Naive thymus-derived CD8-positive, alpha-beta T cell (primary cell): ENCODE measurements at regions of chr10 and their contacts with region 1.

Region 1: DNA sequence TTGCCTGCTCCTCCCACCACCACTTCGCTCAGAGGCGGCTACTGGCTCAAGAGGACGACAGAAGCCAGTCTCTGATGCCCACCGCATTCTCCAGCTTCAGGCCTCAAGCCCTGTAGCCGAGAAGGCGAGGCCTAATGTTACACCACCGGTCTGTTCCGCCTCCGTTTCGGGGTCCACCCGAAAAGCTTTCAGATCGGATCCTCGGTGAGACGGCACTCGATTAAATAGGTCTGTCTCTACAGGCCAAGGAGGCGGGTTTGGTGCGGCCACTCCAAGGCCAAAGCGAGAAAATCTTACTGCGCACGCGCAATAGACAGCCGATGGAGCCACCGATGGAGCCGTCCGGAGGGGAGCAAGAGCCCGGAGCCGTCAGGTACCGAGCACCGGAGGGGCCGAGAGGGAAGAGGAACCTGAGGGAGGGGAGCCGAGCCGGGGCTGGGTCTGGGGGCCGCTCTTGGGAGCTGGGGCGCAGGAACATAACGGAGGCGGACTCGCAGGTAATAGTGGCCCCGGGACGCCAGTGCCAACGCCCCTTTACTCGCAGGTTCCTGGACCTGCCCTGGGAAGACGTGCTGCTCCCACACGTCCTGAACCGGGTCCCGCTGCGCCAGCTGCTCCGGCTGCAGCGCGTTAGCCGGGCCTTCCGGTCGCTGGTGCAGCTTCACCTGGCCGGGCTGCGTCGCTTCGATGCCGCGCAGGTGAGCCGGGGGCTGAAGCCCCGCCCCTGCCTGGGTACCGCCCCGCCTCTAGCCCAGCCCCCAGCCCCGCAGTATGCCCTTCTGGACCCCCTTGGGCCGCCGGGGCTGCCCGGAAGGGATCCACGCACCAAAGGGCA is at the start of gene FBXL15:
- DNase-seq: peak; percentile 77 to 97 (median 90)
- ATAC-seq: peak; percentile 71 to 76
- H3K4me3 Mint-ChIP-seq: peak within 1 kb of the TSS; percentile 93 to 100 (median 98)
- H3K27ac Mint-ChIP-seq: peak within 1 kb of the TSS; percentile 92 to 97 (median 95)
- H3K4me1 Mint-ChIP-seq: peaks cover 23 to 48% (median 46%) of the 10 kb centered on the region in 4 donors
- H3K27me3 Mint-ChIP-seq: peaks cover 11 to 25% (median 16%) of the 10 kb centered on the region in 5 donors
- polyA plus RNA-seq, gene FBXL15: 26.8 to 35.5 (median 28.5) TPM

Region 2: GRCh38 chr10:102185811-102186527 is 235.1 kb before region 1 on chr10:
- POLR2A ChIA-PET with region 1: no interaction called
- DNase-seq: no peak
- ATAC-seq: no peak
- H3K4me3 Mint-ChIP-seq: no peak overlapping the region
- H3K27ac Mint-ChIP-seq: no peak overlapping the region
- H3K4me1 Mint-ChIP-seq: peaks cover 6 to 17% (median 11%) of the 10 kb centered on the region in 4 donors
- H3K27me3 Mint-ChIP-seq: no peaks in the 10 kb centered on the region

Region 3: DNA sequence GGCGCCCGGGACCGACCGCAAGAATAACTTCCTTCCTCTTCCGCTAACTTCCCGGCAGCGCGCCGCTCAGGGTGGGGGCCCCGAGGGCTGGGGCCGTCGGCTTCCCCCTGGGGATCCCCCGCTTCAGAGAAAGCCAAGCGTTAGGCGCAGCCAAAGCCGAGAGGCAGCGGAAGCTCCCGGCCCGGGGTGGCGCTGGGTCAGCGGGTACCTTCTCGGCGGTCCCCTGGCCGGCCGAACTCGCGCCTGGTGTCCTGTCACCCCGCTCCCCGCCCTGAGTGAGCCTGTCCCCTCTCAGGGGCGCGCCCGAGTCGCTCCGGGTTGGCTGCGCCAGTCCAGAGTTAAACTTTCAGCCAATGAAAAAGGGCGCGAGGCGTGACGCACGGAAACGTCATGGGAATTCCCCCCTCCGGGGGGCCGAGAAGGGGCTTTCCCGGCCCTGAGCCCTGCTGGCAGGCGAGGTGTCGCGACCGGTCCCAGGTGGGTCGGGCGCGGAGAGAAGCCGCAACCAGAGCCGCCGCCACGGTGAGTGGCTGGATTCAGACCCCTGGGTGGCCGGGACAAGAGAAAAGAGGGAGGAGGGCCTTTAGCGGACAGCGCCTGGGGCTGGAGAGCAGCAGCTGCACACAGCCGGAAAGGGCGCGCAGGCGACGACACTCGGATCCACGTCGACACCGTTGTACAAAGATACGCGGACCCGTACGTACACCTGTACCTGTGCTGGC is 26.8 kb before region 1 on chr10:
- POLR2A ChIA-PET with region 1: interaction called, 102 read pairs
- DNase-seq: peak; percentile 96 to 100 (median 99)
- ATAC-seq: peak; percentile 77 to 80
- H3K4me3 Mint-ChIP-seq: peak overlapping the region; percentile 93 to 98 (median 96)
- H3K27ac Mint-ChIP-seq: peak overlapping the region; percentile 92 to 100 (median 100)
- H3K4me1 Mint-ChIP-seq: peaks cover 13 to 46% (median 41%) of the 10 kb centered on the region in 4 donors
- H3K27me3 Mint-ChIP-seq: no peaks in the 10 kb centered on the region

Region 4: DNA sequence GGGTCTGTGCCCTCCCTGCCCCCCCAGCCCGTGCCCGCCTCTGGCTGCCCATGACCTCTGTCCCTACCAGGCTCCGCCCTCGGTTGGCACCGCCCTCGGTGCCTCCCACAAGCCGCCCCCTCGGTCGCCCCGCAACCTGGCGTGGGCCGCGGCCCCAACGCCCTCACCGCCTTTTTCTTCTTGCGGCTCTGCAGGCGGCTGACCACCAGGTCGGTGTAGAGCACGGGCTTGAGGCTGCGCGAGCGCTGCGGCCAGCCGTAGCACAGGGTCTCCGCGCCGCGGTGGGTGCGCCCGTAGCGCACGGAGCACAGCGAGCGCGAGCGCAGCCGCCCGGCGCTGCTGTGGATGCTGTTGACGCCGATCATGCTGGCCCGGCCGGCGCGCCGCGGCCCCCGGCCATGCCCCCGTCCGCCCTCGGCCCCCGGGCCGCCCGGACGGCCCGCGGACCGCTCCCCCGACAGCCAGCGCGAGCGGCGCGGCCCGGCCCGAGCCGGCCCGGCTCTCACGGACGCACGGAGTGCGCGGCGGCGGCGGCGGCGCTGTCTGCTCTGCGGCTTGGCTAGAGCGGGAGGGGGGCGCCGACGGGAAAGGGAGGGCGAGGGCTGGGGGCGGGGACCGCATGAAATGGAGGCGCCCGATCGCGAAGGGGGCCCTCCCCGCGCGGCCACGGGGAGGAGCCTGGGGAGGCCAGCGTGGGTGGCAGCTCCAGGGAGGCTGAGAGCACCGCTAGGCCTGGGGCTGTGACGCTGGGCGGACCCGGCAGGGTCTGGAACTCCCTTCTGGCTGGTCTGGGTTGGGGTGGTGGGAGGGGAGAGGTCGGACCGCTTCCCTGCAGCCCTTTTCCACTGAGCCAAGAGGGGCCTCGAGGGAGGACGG is 12.1 kb before region 1 on chr10:
- POLR2A ChIA-PET with region 1: interaction called, 52 read pairs
- DNase-seq: peak in 9 of 10 donors; percentile 60 to 91 (median 81)
- ATAC-seq: peak; percentile 75 to 81
- H3K4me3 Mint-ChIP-seq: peak overlapping the region; percentile 71 to 91 (median 86)
- H3K27ac Mint-ChIP-seq: peak overlapping the region; percentile 64 to 96 (median 89)
- H3K4me1 Mint-ChIP-seq: peaks cover 28 to 57% (median 40%) of the 10 kb centered on the region in 4 donors
- H3K27me3 Mint-ChIP-seq: peaks cover 0 to 27% (median 0%) of the 10 kb centered on the region in 5 donors

Region 5: GRCh38 chr10:102432162-102432950 is 11.3 kb after region 1 on chr10 and contains the start of gene CUEDC2:
- POLR2A ChIA-PET with region 1: interaction called, 115 read pairs
- DNase-seq: peak; percentile 87 to 97 (median 92)
- ATAC-seq: peak; percentile 89 to 91
- H3K4me3 Mint-ChIP-seq: peak within 1 kb of the TSS; percentile 89 to 97 (median 94)
- H3K27ac Mint-ChIP-seq: peak within 1 kb of the TSS; percentile 89 to 99 (median 96)
- H3K4me1 Mint-ChIP-seq: peaks cover 29 to 57% (median 54%) of the 10 kb centered on the region in 4 donors
- H3K27me3 Mint-ChIP-seq: peaks cover 0 to 2% (median 0%) of the 10 kb centered on the region in 5 donors
- polyA plus RNA-seq, gene CUEDC2: 60.6 to 76.9 (median 70.8) TPM

Region 6: GRCh38 chr10:102461187-102462054 is 40.4 kb after region 1 on chr10:
- POLR2A ChIA-PET with region 1: interaction called, 16 read pairs
- DNase-seq: peak; percentile 85 to 95 (median 90)
- ATAC-seq: peak; percentile 99 to 100
- H3K4me3 Mint-ChIP-seq: peak overlapping the region; percentile 86 to 98 (median 92)
- H3K27ac Mint-ChIP-seq: peak overlapping the region; percentile 73 to 93 (median 86)
- H3K4me1 Mint-ChIP-seq: peaks cover 28 to 44% (median 32%) of the 10 kb centered on the region in 4 donors
- H3K27me3 Mint-ChIP-seq: peaks cover 0 to 1% (median 0%) of the 10 kb centered on the region in 5 donors

Region 7: DNA sequence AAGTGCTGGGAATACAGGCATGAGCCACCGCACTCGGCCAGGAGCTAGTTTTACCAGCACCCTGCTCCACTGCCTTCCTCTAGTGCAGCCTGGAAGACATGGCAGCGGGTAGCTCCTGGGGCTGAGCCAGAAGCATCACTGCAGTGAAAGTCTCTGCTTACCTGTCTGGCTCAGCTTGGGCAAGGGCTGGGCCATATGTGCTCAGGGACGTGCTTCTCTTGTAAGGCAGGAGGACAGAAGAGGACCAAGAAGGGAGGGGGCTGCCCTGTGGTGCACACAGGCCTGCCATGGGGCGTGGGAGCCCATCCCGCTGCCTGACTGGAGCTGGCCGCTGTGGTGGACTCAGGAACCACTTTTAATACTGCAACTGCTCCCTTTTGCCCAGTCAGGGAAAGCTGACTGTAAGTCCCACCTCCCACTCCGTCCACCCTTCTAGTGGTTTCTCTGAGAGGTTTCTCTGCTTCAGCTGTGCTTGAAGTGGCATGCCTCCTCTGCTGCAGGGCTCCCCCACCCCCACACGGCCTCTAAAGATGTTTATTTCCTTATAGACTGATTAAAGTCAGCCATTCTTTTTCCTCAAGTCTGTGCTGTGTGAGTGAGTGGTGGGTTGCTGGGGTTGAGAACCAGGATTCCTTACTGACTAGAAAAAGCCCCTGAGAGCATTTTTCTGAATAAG is 55.6 kb after region 1 on chr10:
- POLR2A ChIA-PET with region 1: interaction called, 10 read pairs
- DNase-seq: peak in 6 of 10 donors; percentile 17 to 69 (median 44)
- ATAC-seq: peak; percentile 29 to 44
- H3K4me3 Mint-ChIP-seq: peak overlapping the region in 6 of 10 donors; percentile 28 to 65 (median 44)
- H3K27ac Mint-ChIP-seq: peak overlapping the region; percentile 70 to 94 (median 88)
- H3K4me1 Mint-ChIP-seq: peaks cover 24 to 54% (median 44%) of the 10 kb centered on the region in 4 donors
- H3K27me3 Mint-ChIP-seq: no peaks in the 10 kb centered on the region